Spleen (tissue), 13 donors: ENCODE measurements at regions of chr22 and their contacts with region 1.

Region 1: DNA sequence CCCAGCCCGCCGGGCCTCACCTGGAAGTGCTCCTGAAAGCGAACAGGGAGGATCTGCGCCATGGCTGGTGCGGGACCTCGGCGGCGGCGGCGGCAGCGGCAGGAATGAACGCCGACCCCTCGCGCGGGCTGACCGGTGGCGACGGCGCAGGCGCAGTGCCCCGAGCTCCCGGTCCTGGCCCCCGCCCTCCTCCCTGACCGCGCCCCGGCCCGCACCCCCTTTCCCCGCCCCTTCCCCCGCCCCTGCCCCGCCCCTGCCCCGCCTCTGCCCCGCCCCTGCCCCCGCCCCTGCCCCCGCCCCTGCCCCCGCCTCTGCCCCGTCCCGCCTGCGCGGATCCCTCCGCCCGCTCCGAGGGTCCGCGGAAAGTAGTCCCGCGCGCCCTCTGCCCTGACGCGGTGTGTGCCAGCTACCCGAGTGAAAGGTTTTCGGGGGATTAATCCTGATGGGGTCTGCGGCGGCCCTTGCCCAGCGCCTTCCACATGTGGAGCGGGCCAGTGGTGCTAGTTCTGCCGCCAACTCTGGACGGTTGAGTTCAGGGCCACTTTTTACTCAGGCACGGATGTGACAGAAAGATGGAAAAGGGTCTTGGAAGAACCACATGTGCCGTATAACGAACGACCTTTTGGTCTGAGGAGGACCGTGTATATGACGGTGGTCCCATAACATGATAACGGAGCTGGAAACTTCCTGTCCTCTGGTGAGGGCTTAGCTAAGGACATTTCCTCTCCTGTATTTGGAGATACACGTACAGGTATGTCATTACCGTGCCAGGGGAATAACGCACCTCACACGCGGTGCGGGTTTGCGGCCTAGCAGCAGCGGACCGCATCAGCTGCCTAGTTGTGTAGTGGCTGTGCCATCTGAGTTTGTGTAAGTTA is at the start of gene CLTCL1:
- DNase-seq: peak; percentile 95
- H3K4me3 ChIP-seq: peak within 1 kb of the TSS; percentile 70 to 98 (median 90)
- H3K27ac ChIP-seq: peak within 1 kb of the TSS in 7 of 8 donors; percentile 68 to 87 (median 81)
- H3K4me1 ChIP-seq: peaks cover 14 to 32% (median 26%) of the 10 kb centered on the region in 6 donors
- H3K27me3 ChIP-seq: peaks cover 0 to 27% (median 0%) of the 10 kb centered on the region in 7 donors
- CTCF ChIP-seq: no peak
- POLR2A ChIP-seq: no peak
- total RNA-seq, gene CLTCL1: 4.4 to 12.4 (median 6.4) TPM

Region 2: DNA sequence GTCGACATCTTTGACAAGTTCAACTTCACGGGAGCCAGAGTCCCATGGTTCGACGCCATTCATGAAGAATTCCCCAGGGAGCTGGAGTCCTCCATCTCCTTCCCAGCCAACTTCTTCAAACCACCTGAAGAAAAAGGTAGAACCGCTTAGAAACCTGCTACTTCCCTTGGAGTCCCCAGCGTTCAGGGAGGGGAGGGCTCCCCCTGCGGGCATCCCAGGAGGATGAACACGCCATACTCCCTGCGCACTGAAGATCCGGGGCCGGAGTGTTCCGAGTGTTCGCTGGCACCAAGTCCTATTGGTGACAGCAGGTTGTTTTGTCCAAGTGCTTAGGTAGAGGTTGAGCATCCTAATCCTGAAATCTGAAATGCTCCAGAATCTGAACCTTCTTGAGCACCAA is 304.1 kb before region 1 on chr22:
- intact Hi-C with region 1: no loop called
- DNase-seq: no peak
- H3K4me3 ChIP-seq: no peak overlapping the region
- H3K27ac ChIP-seq: no peak overlapping the region
- H3K4me1 ChIP-seq: no peaks in the 10 kb centered on the region
- H3K27me3 ChIP-seq: peaks cover 0 to 17% (median 0%) of the 10 kb centered on the region in 7 donors
- CTCF ChIP-seq: peak in 4 of 11 experiments; percentile 18 to 56 (median 20)
- POLR2A ChIP-seq: no peak

Region 3: GRCh38 chr22:19228179-19228578 is 63.6 kb before region 1 on chr22:
- intact Hi-C with region 1: no loop called
- DNase-seq: no peak
- H3K4me3 ChIP-seq: no peak overlapping the region
- H3K27ac ChIP-seq: no peak overlapping the region
- H3K4me1 ChIP-seq: no peaks in the 10 kb centered on the region
- H3K27me3 ChIP-seq: no peaks in the 10 kb centered on the region
- CTCF ChIP-seq: no peak
- POLR2A ChIP-seq: no peak

Region 4: DNA sequence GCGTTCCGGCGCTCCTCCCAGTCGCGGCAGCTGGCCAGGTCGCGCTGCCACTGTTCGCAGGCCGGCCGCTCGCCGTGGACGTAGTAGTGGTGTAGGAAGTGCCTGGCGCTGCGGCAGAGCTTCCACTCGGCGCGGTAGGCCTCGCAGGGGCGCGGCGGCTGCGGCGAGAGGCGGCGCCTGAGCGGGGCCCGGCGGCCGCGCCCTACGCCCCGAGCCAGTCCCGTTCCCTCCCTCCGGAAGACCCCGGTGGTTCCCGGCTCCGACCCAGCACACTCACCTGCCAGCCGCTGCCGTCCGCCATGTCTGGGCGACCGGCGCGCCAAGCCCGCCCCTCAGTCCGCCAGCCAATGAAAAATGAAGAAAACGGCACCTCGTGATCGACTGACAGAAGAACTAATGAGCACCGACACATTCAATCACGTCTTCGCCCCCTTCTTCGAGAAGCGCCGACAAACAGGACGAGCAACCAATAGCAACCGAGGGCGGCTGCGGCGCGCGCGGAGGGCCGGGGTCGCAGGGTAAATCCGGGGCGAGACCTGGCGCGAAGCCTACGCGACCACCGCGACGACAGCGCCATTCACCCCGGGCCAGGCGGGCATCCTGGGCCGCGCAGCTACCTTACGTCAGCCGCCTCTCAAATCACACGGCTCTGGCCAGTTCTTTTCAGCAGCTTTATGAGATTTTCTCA is 155.7 kb after region 1 on chr22 and contains the start of gene C22orf39:
- intact Hi-C with region 1: loop called (anchors 10 kb)
- DNase-seq: peak; percentile 95
- H3K4me3 ChIP-seq: peak within 1 kb of the TSS; percentile 64 to 98 (median 84)
- H3K27ac ChIP-seq: peak within 1 kb of the TSS; percentile 59 to 98 (median 95)
- H3K4me1 ChIP-seq: peaks cover 15 to 61% (median 41%) of the 10 kb centered on the region in 6 donors
- H3K27me3 ChIP-seq: no peaks in the 10 kb centered on the region
- CTCF ChIP-seq: peak in 4 of 11 experiments; percentile 9 to 21 (median 16)
- POLR2A ChIP-seq: peak in 1 of 3 donors; percentile 61
- total RNA-seq, gene C22orf39: 28.8 to 48.8 (median 34.1) TPM